ENCODE measurements at regions of chr13 and their contacts with region 1.

Region 1: DNA sequence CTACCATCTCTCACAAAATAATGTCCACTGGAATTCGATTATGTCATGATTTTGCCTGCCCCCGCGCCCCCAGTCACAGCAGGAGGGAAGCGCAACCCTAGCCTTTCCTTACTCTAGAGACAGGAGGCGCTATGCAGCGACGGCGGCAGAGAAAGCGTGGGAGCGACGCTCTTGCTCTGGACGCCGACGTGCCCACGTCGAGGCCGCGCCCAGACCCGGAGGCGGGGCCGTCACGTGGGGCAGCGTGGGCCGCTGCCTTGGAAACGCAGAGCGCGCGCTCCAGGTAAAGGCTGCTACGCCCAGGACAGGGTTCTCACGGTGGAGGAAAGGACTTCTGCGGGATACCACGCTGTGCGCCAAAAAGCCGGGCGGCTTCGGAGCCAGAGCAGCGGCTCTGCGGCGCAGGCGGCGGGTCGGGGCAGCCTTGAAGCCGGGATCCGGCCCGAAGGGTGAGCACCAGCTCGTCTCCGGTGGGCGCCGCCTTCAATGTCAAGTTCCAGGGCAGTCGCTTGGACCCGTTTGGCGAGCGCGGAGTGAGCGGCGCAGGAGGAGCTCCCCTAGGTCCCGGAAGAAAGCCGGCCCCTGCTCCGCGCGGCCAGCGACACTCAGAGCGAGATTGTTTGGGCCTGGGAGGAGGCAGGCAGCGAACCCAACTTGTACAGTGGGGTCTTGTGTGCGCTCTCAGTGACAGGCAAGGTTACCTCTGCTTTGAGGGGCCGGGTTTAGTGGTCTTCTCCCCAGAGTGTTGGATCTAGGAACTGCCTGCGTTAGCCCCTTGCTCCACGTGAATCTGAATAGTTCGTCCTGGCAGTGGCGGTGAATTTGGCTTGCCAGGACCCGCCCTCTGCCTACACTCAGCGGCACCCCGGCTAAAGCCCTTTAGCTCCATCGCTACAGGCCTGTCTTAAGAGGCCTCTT is 121.7 kb downstream of the MRPL57 start:
- DNase-seq: peak; percentile 87
- ATAC-seq: peak; percentile 94
- H3K4me3 Mint-ChIP-seq: peak overlapping the region; percentile 89
- H3K27ac Mint-ChIP-seq: peak overlapping the region; percentile 66
- H3K4me1 Mint-ChIP-seq: peaks cover 25% of the 10 kb centered on the region
- H3K27me3 Mint-ChIP-seq: no peaks in the 10 kb centered on the region

Region 2: GRCh38 chr13:21060987-21061763 is 237.0 kb before region 1 on chr13 and contains the start of gene LATS2:
- CTCF ChIA-PET with region 1: no interaction called
- POLR2A ChIA-PET with region 1: no interaction called
- DNase-seq: peak; percentile 72
- ATAC-seq: peak; percentile 81
- H3K4me3 Mint-ChIP-seq: peak within 1 kb of the TSS; percentile 74
- H3K27ac Mint-ChIP-seq: peak within 1 kb of the TSS; percentile 60
- H3K4me1 Mint-ChIP-seq: peaks cover 7% of the 10 kb centered on the region
- H3K27me3 Mint-ChIP-seq: peaks cover 48% of the 10 kb centered on the region
- total RNA-seq, gene LATS2: 3.1 to 4.2 TPM

Region 3: DNA sequence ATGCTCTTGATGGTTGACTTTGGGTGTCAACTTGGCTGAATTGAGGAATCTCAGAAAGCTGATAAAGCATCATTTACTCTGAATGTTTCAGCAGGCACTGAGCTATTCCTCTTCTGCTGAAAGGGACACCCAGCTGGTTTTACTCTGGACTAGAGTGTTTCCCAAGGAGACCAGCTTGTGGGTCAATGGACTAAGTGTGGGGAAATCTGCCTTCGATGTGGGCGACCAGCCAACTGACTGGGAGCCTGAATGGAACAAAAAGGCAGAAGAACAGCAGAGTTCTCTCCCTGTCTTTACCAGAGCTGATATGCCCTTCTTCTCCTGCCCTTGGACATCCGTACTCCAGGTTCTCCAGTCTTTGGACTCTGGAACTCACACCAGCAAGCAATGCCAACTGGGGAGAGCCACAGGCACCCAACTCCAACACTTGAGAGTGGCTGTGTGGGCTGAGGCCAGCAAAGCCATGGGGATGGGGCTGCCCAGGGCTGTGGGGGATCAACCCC is 89.5 kb before region 1 on chr13:
- CTCF ChIA-PET with region 1: no interaction called
- POLR2A ChIA-PET with region 1: no interaction called
- DNase-seq: no peak
- ATAC-seq: no peak
- H3K4me3 Mint-ChIP-seq: no peak overlapping the region
- H3K27ac Mint-ChIP-seq: no peak overlapping the region
- H3K4me1 Mint-ChIP-seq: no peaks in the 10 kb centered on the region
- H3K27me3 Mint-ChIP-seq: peaks cover 42% of the 10 kb centered on the region

Region 4: DNA sequence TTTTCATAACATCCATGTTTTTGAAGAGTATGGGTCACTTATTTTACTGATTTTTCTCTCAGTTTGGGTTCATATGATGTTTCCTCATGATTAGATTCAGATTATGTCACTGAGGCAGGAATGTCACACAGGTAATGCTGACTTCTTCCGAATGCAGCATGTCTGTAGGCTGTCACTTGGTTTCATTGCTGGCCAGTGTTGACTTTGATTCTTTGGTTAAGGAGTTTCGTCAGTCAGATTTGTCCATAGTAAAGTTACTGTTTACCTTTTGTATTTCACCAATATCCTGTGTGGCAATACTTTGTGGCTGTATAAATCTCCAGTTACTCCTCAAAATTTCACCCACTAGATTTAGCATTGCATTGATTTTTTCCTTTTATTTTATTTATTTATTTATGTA is 16.1 kb before region 1 on chr13:
- CTCF ChIA-PET with region 1: interaction called, 10 read pairs
- POLR2A ChIA-PET with region 1: no interaction called
- DNase-seq: no peak
- ATAC-seq: no peak
- H3K4me3 Mint-ChIP-seq: no peak overlapping the region
- H3K27ac Mint-ChIP-seq: no peak overlapping the region
- H3K4me1 Mint-ChIP-seq: no peaks in the 10 kb centered on the region
- H3K27me3 Mint-ChIP-seq: peaks cover 24% of the 10 kb centered on the region

Region 5: GRCh38 chr13:21344662-21345176 is 46.5 kb after region 1 on chr13:
- CTCF ChIA-PET with region 1: interaction called, 30 read pairs
- POLR2A ChIA-PET with region 1: interaction called, 3 read pairs
- DNase-seq: peak; percentile 77
- ATAC-seq: peak; percentile 85
- H3K4me3 Mint-ChIP-seq: peak overlapping the region; percentile 75
- H3K27ac Mint-ChIP-seq: peak overlapping the region; percentile 91
- H3K4me1 Mint-ChIP-seq: peaks cover 28% of the 10 kb centered on the region
- H3K27me3 Mint-ChIP-seq: no peaks in the 10 kb centered on the region

Region 6: GRCh38 chr13:21402586-21403228 is 104.5 kb after region 1 on chr13:
- CTCF ChIA-PET with region 1: interaction called, 14 read pairs
- POLR2A ChIA-PET with region 1: no interaction called
- DNase-seq: no peak
- ATAC-seq: no peak
- H3K4me3 Mint-ChIP-seq: no peak overlapping the region
- H3K27ac Mint-ChIP-seq: peak overlapping the region; percentile 2
- H3K4me1 Mint-ChIP-seq: peaks cover 39% of the 10 kb centered on the region
- H3K27me3 Mint-ChIP-seq: no peaks in the 10 kb centered on the region

Region 7: GRCh38 chr13:21476893-21477472 is 178.8 kb after region 1 on chr13:
- CTCF ChIA-PET with region 1: interaction called, 183 read pairs
- POLR2A ChIA-PET with region 1: interaction called, 3 read pairs
- DNase-seq: peak; percentile 88
- ATAC-seq: peak; percentile 89
- H3K4me3 Mint-ChIP-seq: peak overlapping the region; percentile 68
- H3K27ac Mint-ChIP-seq: peak overlapping the region; percentile 26
- H3K4me1 Mint-ChIP-seq: peaks cover 15% of the 10 kb centered on the region
- H3K27me3 Mint-ChIP-seq: peaks cover 2% of the 10 kb centered on the region

Measured in activated CD8-positive, alpha-beta T cell treated with anti-CD3 and anti-CD28 coated beads, Interleukin-2, amount 10 ng/mL, durations not matched to agents 7 days and 5 days (primary cell).